ENCODE measurements at regions of chr4 and their contacts with region 1.

Region 1: GRCh38 chr4:6926681-6927478 is 17.3 kb downstream of the TBC1D14 start:
- H3K4me3 ChIP-seq: no peak overlapping the region
- H3K27ac ChIP-seq: no peak overlapping the region
- H3K4me1 ChIP-seq: peaks cover 2% of the 10 kb centered on the region; the same call in 1 of the 2 replicates
- CTCF ChIP-seq: no peak

Region 2: DNA sequence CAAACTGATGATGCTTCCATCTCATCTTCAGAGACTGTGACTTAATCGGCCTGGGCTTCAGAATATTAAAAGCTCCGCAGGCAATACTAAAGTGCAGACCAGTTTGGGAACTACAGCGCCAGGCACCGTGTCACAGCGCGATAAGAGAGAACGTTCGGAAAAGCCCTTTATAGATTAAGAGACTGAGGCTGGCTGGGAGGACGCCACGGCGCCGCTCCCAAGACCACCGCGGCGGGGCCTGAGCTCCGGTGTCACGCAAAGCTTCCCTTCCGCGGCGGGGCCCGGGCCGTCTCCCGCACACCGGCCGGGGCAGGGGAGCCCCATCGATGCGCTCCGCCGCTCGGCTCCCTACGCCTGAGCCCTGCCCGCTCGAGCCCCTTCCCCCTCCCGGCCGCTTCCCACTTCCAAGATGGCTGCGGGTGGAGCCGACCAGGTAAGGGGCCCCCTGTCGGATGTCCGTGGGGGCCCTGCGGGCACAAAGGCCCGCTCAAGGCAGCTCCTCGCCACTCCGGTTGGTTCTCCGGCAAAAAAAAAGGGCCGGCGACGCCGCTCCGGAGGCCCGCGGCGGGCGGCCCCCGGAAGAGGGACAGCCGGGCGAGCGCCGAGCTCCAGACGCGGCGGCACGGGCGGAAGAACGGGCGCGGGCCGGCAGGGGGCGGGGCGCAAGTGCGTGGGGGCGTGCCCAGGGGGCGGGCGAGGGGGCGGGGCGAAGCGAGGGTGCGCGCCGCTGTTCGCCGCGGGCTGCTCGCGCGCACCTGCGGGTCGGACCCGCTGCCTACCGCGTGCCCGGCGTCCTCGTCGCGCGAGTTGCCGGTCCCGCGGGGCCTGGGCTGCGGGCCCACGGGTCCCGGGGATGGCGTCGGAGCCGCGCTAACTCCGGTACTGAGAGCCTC is 17.6 kb before region 1 on chr4 and contains the start of gene TBC1D14:
- CTCF ChIA-PET with region 1: interaction called, 7 read pairs
- POLR2A ChIA-PET with region 1: interaction called, 11 read pairs
- H3K4me3 ChIP-seq: peak within 1 kb of the TSS; percentile 70
- H3K27ac ChIP-seq: peak within 1 kb of the TSS; percentile 88
- H3K4me1 ChIP-seq: no peaks in the 10 kb centered on the region
- CTCF ChIP-seq: peak; percentile 50; the same call in 1 of the 2 replicates

Region 3: GRCh38 chr4:6942238-6942800 is 15.4 kb after region 1 on chr4:
- CTCF ChIA-PET with region 1: no interaction called
- POLR2A ChIA-PET with region 1: no interaction called
- H3K4me3 ChIP-seq: no peak overlapping the region
- H3K27ac ChIP-seq: no peak overlapping the region
- H3K4me1 ChIP-seq: 0 out of 2 replicates have a peak, but pooled peaks cover 2% of the 10 kb centered on the region
- CTCF ChIP-seq: no peak

Region 4: DNA sequence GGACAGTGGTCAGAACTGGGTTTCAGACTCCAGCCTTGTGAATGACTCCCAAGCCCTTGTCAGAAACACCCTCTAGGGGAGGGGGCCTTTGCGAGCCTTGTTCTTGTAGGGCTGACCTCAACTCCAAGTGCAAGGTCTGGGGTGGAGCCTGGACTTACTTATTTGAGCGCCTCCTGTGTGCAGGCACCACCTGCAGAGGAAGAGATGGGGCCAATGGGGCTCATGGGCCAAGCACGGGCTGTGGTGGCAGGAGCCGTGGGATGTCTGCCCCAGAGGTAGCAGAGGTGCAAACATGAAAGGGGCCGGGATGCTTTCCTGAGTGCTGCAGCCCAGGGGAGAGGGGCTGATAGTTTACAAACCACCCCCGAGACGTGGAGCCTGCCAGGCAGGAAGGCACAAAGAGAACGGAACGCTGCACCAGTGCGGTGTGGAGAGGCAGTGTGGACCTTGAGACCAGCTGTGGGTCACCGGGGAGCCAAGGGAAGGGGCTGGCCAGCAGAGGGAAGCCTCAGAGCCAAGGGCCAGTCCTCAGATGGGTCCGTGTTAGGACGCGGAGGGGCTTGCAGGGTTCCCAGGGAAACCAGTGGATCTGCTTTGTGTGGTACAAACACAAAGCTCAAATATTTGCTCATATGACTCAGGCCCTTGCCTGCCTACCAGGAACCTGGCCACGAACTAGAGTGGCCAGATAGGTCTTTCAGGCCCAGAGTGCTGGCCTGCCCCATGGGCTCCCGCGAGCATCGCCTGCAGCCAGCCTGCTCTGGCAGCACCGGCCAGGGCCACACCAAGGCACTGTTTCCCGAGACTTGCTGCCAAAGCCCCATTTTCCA is 107.6 kb after region 1 on chr4:
- CTCF ChIA-PET with region 1: no interaction called
- POLR2A ChIA-PET with region 1: no interaction called
- H3K4me3 ChIP-seq: no peak overlapping the region
- H3K27ac ChIP-seq: no peak overlapping the region
- H3K4me1 ChIP-seq: no peaks in the 10 kb centered on the region
- CTCF ChIP-seq: no peak